Activated CD4-positive, alpha-beta memory T cell treated with anti-CD3 and anti-CD28 coated beads for 36 hours (primary cell): ENCODE measurements at regions of chr11 and their contacts with region 1.

Region 1: DNA sequence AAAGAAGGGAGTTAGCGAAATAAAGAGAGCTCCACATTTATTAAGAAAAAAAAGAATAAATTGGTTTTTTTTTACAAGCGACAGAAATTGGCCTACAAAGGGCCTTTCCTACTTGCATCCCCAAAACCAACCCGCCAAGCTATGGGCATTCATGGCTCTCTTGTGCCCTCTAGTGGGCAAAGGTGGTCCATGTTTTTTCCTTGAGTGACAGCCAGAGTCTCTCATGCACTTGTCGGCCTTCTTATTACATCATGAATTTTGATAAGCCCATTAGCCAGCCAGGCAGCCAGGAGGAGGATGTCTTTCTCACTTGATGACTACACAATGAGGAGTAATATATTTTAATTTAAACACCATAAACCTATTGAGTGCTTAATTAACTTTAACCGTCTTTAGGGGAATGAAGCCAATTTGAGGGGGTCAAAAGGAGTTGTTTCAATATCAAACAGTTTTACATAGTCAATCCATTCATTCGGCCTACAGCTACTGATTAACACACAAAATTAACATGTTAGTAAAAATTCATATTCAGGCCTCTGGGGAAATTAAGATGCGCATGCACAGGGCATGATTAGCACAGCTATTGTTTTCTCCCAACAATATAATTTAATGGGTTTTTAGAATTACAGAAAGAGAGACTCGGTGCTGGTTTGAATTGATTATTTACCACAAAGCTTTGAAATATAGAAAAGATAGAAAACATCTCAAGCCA is 85.5 kb downstream of the RCN1 start:
- DNase-seq: peak; percentile 84
- H3K4me3 Mint-ChIP-seq: no peak overlapping the region
- H3K27ac Mint-ChIP-seq: no peak overlapping the region
- H3K4me1 Mint-ChIP-seq: peaks cover 4% of the 10 kb centered on the region
- H3K27me3 Mint-ChIP-seq: peaks cover 8% of the 10 kb centered on the region

Region 2: GRCh38 chr11:31240338-31240904 is 936.0 kb before region 1 on chr11:
- CTCF ChIA-PET with region 1: interaction called, 9 read pairs
- POLR2A ChIA-PET with region 1: no interaction called
- intact Hi-C with region 1: loop called (anchors 5 kb)
- DNase-seq: peak; percentile 10
- H3K4me3 Mint-ChIP-seq: no peak overlapping the region
- H3K27ac Mint-ChIP-seq: no peak overlapping the region
- H3K4me1 Mint-ChIP-seq: no peaks in the 10 kb centered on the region
- H3K27me3 Mint-ChIP-seq: no peaks in the 10 kb centered on the region

Region 3: DNA sequence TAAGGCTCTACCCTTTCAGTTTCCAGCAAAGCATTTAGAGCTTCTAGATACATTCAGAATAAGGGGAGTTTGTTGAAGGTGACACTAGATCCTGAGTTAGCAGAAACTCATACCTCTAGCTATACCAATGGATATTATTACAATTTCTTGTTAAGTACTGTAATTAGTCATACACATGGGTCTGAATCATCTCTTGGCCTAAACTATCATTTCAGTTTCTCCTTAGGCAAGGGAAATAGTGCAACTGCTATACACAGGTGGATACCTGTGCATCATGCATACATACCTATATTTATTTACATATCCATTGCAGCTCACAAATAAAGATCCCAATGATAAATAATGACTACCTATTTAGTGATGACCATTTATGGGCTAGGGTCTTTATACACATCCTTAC is 320.1 kb before region 1 on chr11:
- CTCF ChIA-PET with region 1: no interaction called
- POLR2A ChIA-PET with region 1: no interaction called
- intact Hi-C with region 1: no loop called
- DNase-seq: no peak
- H3K4me3 Mint-ChIP-seq: no peak overlapping the region
- H3K27ac Mint-ChIP-seq: no peak overlapping the region
- H3K4me1 Mint-ChIP-seq: no peaks in the 10 kb centered on the region
- H3K27me3 Mint-ChIP-seq: peaks cover 22% of the 10 kb centered on the region

Region 4: GRCh38 chr11:31903225-31904074 is 272.9 kb before region 1 on chr11:
- CTCF ChIA-PET with region 1: no interaction called
- POLR2A ChIA-PET with region 1: no interaction called
- intact Hi-C with region 1: no loop called
- DNase-seq: no peak
- H3K4me3 Mint-ChIP-seq: no peak overlapping the region
- H3K27ac Mint-ChIP-seq: no peak overlapping the region
- H3K4me1 Mint-ChIP-seq: no peaks in the 10 kb centered on the region
- H3K27me3 Mint-ChIP-seq: peaks cover 14% of the 10 kb centered on the region

Region 5: DNA sequence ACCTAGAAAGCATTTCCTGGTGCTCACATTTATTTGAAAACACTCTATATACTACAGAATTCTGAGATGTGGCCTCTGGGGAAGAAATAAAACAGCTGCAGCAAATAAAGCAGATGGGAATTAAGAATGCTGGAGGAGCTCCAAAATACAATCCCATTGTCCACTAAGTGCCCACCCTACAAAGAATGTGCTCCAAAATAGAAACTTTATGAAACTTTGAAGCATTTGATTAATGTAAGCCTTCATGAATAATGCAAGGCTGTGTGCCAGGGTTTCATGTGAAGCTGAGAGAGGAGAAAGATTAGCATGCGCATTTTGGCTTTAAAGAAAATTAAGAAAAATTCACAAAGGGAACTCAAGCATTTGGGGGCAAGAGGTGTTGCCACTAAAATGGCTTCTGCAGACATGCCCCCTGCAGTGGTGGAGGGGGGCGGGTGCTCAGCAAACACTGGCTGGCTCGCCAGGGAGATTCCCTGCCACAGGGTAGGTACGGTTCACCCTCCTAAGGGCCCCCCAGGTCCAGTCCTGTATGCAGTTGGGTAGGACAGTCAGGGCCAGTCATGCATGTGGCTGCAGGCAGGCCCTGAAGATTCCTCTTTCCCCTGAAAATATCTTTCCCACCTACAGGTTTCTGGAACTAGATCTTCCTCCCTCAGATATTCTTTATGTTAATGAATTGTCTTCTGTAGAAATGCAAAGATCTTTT is 132.1 kb before region 1 on chr11:
- CTCF ChIA-PET with region 1: interaction called, 303 read pairs
- POLR2A ChIA-PET with region 1: no interaction called
- intact Hi-C with region 1: no loop called
- DNase-seq: no peak
- H3K4me3 Mint-ChIP-seq: no peak overlapping the region
- H3K27ac Mint-ChIP-seq: no peak overlapping the region
- H3K4me1 Mint-ChIP-seq: no peaks in the 10 kb centered on the region
- H3K27me3 Mint-ChIP-seq: peaks cover 16% of the 10 kb centered on the region

Region 6: GRCh38 chr11:32162351-32162750 is 14.0 kb before region 1 on chr11:
- CTCF ChIA-PET with region 1: interaction called, 18 read pairs
- POLR2A ChIA-PET with region 1: no interaction called
- intact Hi-C with region 1: no loop called
- DNase-seq: no peak
- H3K4me3 Mint-ChIP-seq: no peak overlapping the region
- H3K27ac Mint-ChIP-seq: no peak overlapping the region
- H3K4me1 Mint-ChIP-seq: no peaks in the 10 kb centered on the region
- H3K27me3 Mint-ChIP-seq: peaks cover 20% of the 10 kb centered on the region

Region 7: GRCh38 chr11:32244453-32244852 is 68.1 kb after region 1 on chr11:
- CTCF ChIA-PET with region 1: no interaction called
- POLR2A ChIA-PET with region 1: no interaction called
- intact Hi-C with region 1: no loop called
- DNase-seq: no peak
- H3K4me3 Mint-ChIP-seq: no peak overlapping the region
- H3K27ac Mint-ChIP-seq: no peak overlapping the region
- H3K4me1 Mint-ChIP-seq: no peaks in the 10 kb centered on the region
- H3K27me3 Mint-ChIP-seq: peaks cover 2% of the 10 kb centered on the region